ENCODE measurements at regions of chr11 and their contacts with region 1.

Region 1: GRCh38 chr11:45294499-45294898 is 8.4 kb upstream of the SYT13 start:
- DNase-seq: no peak
- H3K4me3 ChIP-seq: no peak overlapping the region
- H3K27ac ChIP-seq: no peak overlapping the region
- H3K27me3 ChIP-seq: peaks cover 0 to 3% (median 0%) of the 10 kb centered on the region in 45 donors
- CTCF ChIP-seq: no peak

Region 2: DNA sequence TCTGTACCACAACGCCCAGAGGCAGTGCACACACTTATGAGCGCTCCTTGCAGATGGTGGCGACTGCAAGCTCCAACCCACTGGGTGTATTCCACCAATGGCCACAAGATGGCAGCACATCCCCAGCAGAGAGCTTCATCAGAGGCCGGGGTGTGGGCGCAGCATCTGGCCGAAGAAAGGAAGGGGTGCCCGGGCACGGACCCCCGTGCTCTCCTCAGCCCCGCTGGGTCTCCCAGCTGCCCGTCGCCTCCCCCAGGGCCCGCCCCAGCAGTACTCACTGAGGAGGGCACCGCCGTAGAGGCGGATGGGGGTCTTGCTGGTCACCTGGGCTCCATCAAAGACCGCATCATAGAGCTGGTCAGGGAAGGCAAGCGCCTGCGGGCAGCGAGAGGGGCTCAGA is 358.0 kb before region 1 on chr11:
- intact Hi-C with region 1: loop called in 1 of 2 experiments (anchors 5 kb)
- DNase-seq: peak; percentile 74 to 94 (median 88)
- H3K4me3 ChIP-seq: peak overlapping the region in 31 of 59 donors; percentile 3 to 56 (median 32)
- H3K27ac ChIP-seq: peak overlapping the region in 5 of 59 donors; percentile 8 to 60 (median 25)
- H3K27me3 ChIP-seq: no peaks in the 10 kb centered on the region
- CTCF ChIP-seq: peak; percentile 84 to 100 (median 98)

Region 3: GRCh38 chr11:45110562-45110961 is 183.9 kb before region 1 on chr11:
- intact Hi-C with region 1: loop called (anchors 2 kb)
- DNase-seq: peak in 2 of 10 donors; percentile 58 to 59
- H3K4me3 ChIP-seq: no peak overlapping the region
- H3K27ac ChIP-seq: no peak overlapping the region
- H3K27me3 ChIP-seq: peaks cover 0 to 3% (median 0%) of the 10 kb centered on the region in 45 donors
- CTCF ChIP-seq: peak; percentile 61 to 98 (median 90)